Naive thymus-derived CD4-positive, alpha-beta T cell (primary cell): ENCODE measurements at regions of chr6 and their contacts with region 1.

Region 1: DNA sequence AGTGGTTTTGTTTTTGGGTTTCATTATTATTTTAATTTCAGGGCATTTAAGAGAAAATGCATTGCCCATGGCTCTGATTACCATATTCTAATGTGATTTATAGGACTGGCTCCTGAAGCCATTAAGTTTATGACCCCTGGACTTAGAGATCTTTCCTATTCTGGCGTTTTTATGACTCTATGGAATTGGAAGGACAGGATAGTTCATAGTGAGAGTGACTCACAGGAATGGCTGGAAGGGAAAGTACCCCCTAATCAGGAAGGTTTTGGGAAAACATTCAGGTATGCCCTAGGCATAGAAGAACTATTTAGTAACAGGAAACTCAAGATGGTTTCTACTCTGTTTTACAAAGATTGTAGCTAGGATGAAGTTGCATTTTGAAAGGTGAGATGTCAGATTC is 108.6 kb upstream of the SLC2A12 start:
- DNase-seq: no peak
- ATAC-seq: no peak
- H3K4me3 ChIP-seq: no peak overlapping the region
- H3K4me3 Mint-ChIP-seq: no peak overlapping the region
- H3K27ac ChIP-seq: no peak overlapping the region
- H3K27ac Mint-ChIP-seq: no peak overlapping the region
- H3K4me1 ChIP-seq: no peaks in the 10 kb centered on the region
- H3K4me1 Mint-ChIP-seq: no peaks in the 10 kb centered on the region
- H3K27me3 ChIP-seq: no peaks in the 10 kb centered on the region
- H3K27me3 Mint-ChIP-seq: peaks cover 0 to 3% (median 0%) of the 10 kb centered on the region in 5 donors

Region 2: DNA sequence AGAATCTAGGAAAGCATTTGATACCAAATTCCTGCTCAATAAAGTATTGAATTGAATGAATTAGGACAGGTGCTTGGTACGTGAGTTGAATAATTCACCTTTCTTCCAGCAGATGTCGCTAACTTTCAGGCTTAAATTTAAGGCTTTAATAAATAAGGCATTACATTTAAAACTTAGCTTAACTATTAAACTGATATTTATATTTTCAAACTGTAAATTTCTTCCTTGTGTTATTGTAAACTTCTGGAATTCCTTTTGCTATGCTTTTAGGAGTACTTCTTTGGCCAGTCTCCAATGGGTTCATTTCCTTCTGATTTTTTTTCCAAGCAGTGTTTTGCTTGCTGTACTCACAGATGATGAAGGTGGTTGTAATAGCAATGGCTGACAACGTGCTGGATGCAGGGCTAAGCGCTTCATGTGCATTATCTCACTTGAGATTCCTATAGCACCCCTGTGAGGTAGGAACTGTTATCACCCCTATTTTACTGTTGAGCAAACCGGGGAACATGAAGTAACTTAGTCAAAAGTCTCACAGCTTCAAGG is 37.3 kb before region 1 on chr6:
- CTCF ChIA-PET with region 1: interaction called, 6 read pairs
- POLR2A ChIA-PET with region 1: no interaction called
- intact Hi-C with region 1: loop called in 1 of 2 experiments (anchors 5 kb)
- DNase-seq: peak in 7 of 9 donors; percentile 7 to 75 (median 50)
- ATAC-seq: peak; percentile 99
- H3K4me3 ChIP-seq: no peak overlapping the region
- H3K4me3 Mint-ChIP-seq: peak overlapping the region in 4 of 10 donors; percentile 39 to 53 (median 51)
- H3K27ac ChIP-seq: no peak overlapping the region
- H3K27ac Mint-ChIP-seq: peak overlapping the region in 4 of 9 donors; percentile 22 to 70 (median 68)
- H3K4me1 ChIP-seq: no peaks in the 10 kb centered on the region
- H3K4me1 Mint-ChIP-seq: peaks cover 0 to 4% (median 0%) of the 10 kb centered on the region in 7 donors
- H3K27me3 ChIP-seq: no peaks in the 10 kb centered on the region
- H3K27me3 Mint-ChIP-seq: peaks cover 0 to 4% (median 0%) of the 10 kb centered on the region in 5 donors

Region 3: DNA sequence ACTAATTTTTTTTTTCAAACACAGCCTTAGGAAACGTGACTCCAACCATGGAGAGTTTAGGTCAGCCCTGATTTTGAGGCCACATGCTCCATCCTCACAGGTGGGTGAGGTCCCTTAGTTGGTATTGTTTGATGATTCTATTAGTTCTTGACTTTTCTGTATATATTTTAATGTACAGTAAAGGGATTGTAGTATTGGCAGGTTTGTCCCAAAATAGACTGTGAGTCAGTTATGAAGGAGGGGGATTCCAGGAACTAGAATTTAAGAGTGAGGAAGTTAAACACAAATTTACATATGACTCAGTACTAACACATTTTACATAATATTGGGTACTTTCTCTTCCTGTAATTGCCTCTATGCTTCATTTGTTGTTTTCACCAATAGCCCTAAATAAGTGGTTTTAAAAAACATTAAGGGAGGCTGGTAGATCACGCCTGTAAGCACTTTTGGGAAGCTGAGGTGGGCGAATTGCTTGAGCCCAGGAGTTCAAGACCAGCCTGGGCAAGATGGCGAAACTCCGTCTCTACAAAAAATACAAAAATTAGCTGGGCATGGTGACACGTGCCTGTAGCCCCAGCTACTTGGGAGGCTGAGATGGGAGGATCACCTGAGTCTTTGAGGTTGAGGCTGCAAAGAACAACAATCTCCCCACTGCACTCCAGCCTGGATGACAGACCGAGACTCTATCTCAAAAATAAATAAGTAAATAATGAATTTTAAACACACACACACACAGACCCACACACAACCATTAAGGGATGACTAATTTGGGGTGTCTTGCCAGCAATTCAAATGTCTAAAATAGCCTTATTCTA is 75.1 kb after region 1 on chr6:
- CTCF ChIA-PET with region 1: no interaction called
- POLR2A ChIA-PET with region 1: no interaction called
- intact Hi-C with region 1: no loop called
- DNase-seq: no peak
- ATAC-seq: peak; percentile 69
- H3K4me3 ChIP-seq: no peak overlapping the region
- H3K4me3 Mint-ChIP-seq: peak overlapping the region in 2 of 10 donors; percentile 29 to 48
- H3K27ac ChIP-seq: no peak overlapping the region
- H3K27ac Mint-ChIP-seq: peak overlapping the region in 6 of 9 donors; percentile 6 to 86 (median 43)
- H3K4me1 ChIP-seq: peaks cover 18 to 22% of the 10 kb centered on the region in 2 donors
- H3K4me1 Mint-ChIP-seq: peaks cover 8 to 50% (median 43%) of the 10 kb centered on the region in 7 donors
- H3K27me3 ChIP-seq: no peaks in the 10 kb centered on the region
- H3K27me3 Mint-ChIP-seq: no peaks in the 10 kb centered on the region

Region 4: GRCh38 chr6:134363318-134364039 is 202.4 kb after region 1 on chr6:
- CTCF ChIA-PET with region 1: no interaction called
- POLR2A ChIA-PET with region 1: no interaction called
- intact Hi-C with region 1: no loop called
- DNase-seq: no peak
- ATAC-seq: no peak
- H3K4me3 ChIP-seq: no peak overlapping the region
- H3K4me3 Mint-ChIP-seq: no peak overlapping the region
- H3K27ac ChIP-seq: no peak overlapping the region
- H3K27ac Mint-ChIP-seq: no peak overlapping the region
- H3K4me1 ChIP-seq: no peaks in the 10 kb centered on the region
- H3K4me1 Mint-ChIP-seq: peaks cover 0 to 9% (median 4%) of the 10 kb centered on the region in 7 donors
- H3K27me3 ChIP-seq: no peaks in the 10 kb centered on the region
- H3K27me3 Mint-ChIP-seq: no peaks in the 10 kb centered on the region

Region 5: GRCh38 chr6:134882426-134883038 is 721.5 kb after region 1 on chr6:
- CTCF ChIA-PET with region 1: interaction called, 27 read pairs
- POLR2A ChIA-PET with region 1: no interaction called
- intact Hi-C with region 1: loop called (anchors 1 kb)
- DNase-seq: peak in 7 of 9 donors; percentile 14 to 57 (median 41)
- ATAC-seq: no peak
- H3K4me3 ChIP-seq: no peak overlapping the region
- H3K4me3 Mint-ChIP-seq: no peak overlapping the region
- H3K27ac ChIP-seq: no peak overlapping the region
- H3K27ac Mint-ChIP-seq: no peak overlapping the region
- H3K4me1 ChIP-seq: no peaks in the 10 kb centered on the region
- H3K4me1 Mint-ChIP-seq: peaks cover 0 to 5% (median 0%) of the 10 kb centered on the region in 7 donors
- H3K27me3 ChIP-seq: no peaks in the 10 kb centered on the region
- H3K27me3 Mint-ChIP-seq: peaks cover 4 to 32% (median 11%) of the 10 kb centered on the region in 5 donors

Region 6: DNA sequence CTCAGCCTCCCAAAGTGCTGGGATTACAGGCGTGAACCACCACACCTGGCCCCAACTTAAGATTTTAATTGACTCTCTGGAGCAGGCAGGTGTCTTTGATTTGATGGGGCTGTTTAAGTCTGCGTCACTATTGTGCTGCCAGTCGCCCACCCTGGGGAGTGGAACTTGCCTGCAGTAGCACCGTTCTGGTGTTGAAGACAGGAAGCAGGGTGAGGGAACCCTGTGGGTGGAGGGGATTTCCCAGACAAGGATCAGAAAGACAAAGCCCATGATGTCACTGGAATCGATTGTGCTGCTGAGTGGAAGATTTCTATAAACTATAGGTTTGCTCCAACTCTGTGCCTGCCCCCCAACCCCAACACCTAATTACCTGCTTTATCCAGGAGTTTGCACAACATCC is 777.9 kb after region 1 on chr6:
- CTCF ChIA-PET with region 1: interaction called, 48 read pairs
- POLR2A ChIA-PET with region 1: no interaction called
- intact Hi-C with region 1: loop called (anchors 1 kb)
- DNase-seq: peak in 6 of 9 donors; percentile 27 to 84 (median 34)
- ATAC-seq: peak; percentile 91
- H3K4me3 ChIP-seq: no peak overlapping the region
- H3K4me3 Mint-ChIP-seq: peak overlapping the region in 2 of 10 donors; percentile 25 to 28
- H3K27ac ChIP-seq: no peak overlapping the region
- H3K27ac Mint-ChIP-seq: peak overlapping the region in 3 of 9 donors; percentile 36 to 83 (median 55)
- H3K4me1 ChIP-seq: peaks cover 0 to 6% of the 10 kb centered on the region in 2 donors
- H3K4me1 Mint-ChIP-seq: peaks cover 0 to 15% (median 10%) of the 10 kb centered on the region in 7 donors
- H3K27me3 ChIP-seq: no peaks in the 10 kb centered on the region
- H3K27me3 Mint-ChIP-seq: no peaks in the 10 kb centered on the region

Region 7: GRCh38 chr6:135423649-135424128 is 1262.7 kb after region 1 on chr6:
- CTCF ChIA-PET with region 1: no interaction called
- POLR2A ChIA-PET with region 1: no interaction called
- intact Hi-C with region 1: loop called in 1 of 2 experiments (anchors 1 kb)
- DNase-seq: peak in 5 of 9 donors; percentile 4 to 31 (median 18)
- ATAC-seq: peak; percentile 67
- H3K4me3 ChIP-seq: no peak overlapping the region
- H3K4me3 Mint-ChIP-seq: no peak overlapping the region
- H3K27ac ChIP-seq: no peak overlapping the region
- H3K27ac Mint-ChIP-seq: peak overlapping the region in 1 of 9 donors; percentile 1
- H3K4me1 ChIP-seq: no peaks in the 10 kb centered on the region
- H3K4me1 Mint-ChIP-seq: peaks cover 0 to 14% (median 4%) of the 10 kb centered on the region in 7 donors
- H3K27me3 ChIP-seq: no peaks in the 10 kb centered on the region
- H3K27me3 Mint-ChIP-seq: no peaks in the 10 kb centered on the region

Region 8: DNA sequence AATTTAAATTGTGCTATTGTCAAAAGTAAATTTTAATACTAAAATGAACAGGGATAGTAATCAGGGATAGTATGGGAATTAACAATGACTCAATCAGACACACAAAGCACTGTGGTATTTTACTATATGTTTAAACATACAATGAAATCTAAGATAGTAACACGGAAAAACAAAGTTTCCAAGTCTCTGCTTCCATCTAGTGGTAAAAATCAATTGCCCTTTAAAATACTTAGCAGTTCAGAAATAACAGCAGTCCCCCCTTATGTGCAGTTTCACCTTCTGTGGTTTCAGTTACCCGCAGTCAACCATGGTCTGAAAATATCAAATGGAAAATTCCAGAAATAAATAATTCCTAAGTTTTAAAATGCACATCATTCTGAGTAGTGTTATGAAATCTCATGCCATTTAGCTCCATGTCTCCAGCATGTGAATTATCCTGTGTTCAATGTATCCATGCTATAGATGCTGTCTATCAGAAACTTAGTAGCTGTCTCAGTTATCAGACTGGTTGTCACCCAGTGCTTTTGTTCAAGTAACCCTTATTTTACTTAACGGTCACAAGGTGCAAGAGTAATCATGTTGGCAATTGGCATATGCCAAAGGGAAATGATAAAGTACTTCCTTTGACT is 1278.0 kb after region 1 on chr6:
- CTCF ChIA-PET with region 1: no interaction called
- POLR2A ChIA-PET with region 1: no interaction called
- intact Hi-C with region 1: loop called in 1 of 2 experiments (anchors 1 kb)
- DNase-seq: peak in 6 of 9 donors; percentile 23 to 39 (median 27)
- ATAC-seq: peak; percentile 72
- H3K4me3 ChIP-seq: no peak overlapping the region
- H3K4me3 Mint-ChIP-seq: peak overlapping the region in 8 of 10 donors; percentile 15 to 85 (median 72)
- H3K27ac ChIP-seq: no peak overlapping the region
- H3K27ac Mint-ChIP-seq: peak overlapping the region in 7 of 9 donors; percentile 7 to 87 (median 60)
- H3K4me1 ChIP-seq: peaks cover 0 to 8% of the 10 kb centered on the region in 2 donors
- H3K4me1 Mint-ChIP-seq: peaks cover 12 to 27% (median 20%) of the 10 kb centered on the region in 7 donors
- H3K27me3 ChIP-seq: no peaks in the 10 kb centered on the region
- H3K27me3 Mint-ChIP-seq: no peaks in the 10 kb centered on the region